CD4-positive, alpha-beta memory T cell (primary cell): ENCODE measurements at regions of chr2 and their contacts with region 1.

Region 1: DNA sequence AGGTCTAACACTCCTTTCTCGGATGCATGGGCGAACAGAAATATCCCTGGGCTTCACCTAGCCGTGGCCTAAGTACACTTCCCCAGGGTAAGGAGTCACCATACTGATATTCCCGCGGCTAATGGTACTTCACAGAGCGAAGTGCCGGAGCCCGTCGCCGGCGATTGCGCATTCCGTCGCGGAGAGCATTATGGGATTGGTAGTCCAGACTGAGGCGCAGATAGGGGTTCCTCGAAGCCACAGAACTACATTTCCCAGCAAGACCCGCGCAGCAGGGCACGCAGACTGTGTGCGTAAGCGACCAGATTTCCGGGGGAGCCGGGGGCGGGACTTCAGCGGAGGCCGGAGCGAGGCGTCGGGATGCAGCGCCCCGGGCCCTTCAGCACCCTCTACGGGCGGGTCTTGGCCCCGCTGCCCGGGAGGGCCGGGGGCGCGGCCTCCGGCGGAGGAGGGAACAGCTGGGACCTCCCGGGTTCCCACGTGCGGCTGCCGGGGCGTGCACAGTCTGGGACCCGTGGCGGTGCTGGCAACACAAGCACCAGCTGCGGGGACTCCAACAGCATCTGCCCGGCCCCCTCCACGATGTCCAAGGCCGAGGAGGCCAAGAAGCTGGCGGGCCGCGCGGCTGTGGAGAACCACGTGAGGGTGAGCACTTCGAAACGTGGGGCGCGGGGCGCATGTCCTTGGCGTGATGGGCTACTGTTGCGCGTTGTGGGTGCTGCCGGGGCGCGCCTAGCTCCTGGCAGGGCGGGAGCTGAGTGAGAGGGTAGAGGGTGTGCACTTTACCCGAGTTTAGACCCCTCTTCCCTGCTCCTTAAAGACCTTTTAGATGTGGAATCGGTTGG is at the start of gene RPIA:
- DNase-seq: peak; percentile 98 to 100 (median 98)
- H3K4me3 ChIP-seq: peak within 1 kb of the TSS; percentile 77 to 95
- H3K4me3 Mint-ChIP-seq: peak within 1 kb of the TSS; percentile 93 to 98 (median 96)
- H3K27ac ChIP-seq: peak within 1 kb of the TSS; percentile 78
- H3K27ac Mint-ChIP-seq: peak within 1 kb of the TSS; percentile 91 to 98 (median 96)
- H3K4me1 ChIP-seq: peaks cover 29% of the 10 kb centered on the region
- H3K4me1 Mint-ChIP-seq: peaks cover 37 to 68% (median 47%) of the 10 kb centered on the region in 4 donors
- H3K27me3 ChIP-seq: no peaks in the 10 kb centered on the region
- H3K27me3 Mint-ChIP-seq: no peaks in the 10 kb centered on the region
- total RNA-seq, gene RPIA: 20.9 to 23.2 TPM

Region 2: GRCh38 chr2:88599527-88599926 is 92.0 kb before region 1 on chr2:
- CTCF ChIA-PET with region 1: interaction called, 3 read pairs
- POLR2A ChIA-PET with region 1: interaction called, 6 read pairs
- intact Hi-C with region 1: loop called (anchors 5 kb)
- DNase-seq: no peak
- H3K4me3 ChIP-seq: no peak overlapping the region
- H3K4me3 Mint-ChIP-seq: no peak overlapping the region
- H3K27ac ChIP-seq: peak overlapping the region; percentile 33
- H3K27ac Mint-ChIP-seq: peak overlapping the region in 1 of 7 donors; percentile 36
- H3K4me1 ChIP-seq: peaks cover 16% of the 10 kb centered on the region
- H3K4me1 Mint-ChIP-seq: peaks cover 25 to 44% (median 35%) of the 10 kb centered on the region in 4 donors
- H3K27me3 ChIP-seq: no peaks in the 10 kb centered on the region
- H3K27me3 Mint-ChIP-seq: no peaks in the 10 kb centered on the region

Region 3: DNA sequence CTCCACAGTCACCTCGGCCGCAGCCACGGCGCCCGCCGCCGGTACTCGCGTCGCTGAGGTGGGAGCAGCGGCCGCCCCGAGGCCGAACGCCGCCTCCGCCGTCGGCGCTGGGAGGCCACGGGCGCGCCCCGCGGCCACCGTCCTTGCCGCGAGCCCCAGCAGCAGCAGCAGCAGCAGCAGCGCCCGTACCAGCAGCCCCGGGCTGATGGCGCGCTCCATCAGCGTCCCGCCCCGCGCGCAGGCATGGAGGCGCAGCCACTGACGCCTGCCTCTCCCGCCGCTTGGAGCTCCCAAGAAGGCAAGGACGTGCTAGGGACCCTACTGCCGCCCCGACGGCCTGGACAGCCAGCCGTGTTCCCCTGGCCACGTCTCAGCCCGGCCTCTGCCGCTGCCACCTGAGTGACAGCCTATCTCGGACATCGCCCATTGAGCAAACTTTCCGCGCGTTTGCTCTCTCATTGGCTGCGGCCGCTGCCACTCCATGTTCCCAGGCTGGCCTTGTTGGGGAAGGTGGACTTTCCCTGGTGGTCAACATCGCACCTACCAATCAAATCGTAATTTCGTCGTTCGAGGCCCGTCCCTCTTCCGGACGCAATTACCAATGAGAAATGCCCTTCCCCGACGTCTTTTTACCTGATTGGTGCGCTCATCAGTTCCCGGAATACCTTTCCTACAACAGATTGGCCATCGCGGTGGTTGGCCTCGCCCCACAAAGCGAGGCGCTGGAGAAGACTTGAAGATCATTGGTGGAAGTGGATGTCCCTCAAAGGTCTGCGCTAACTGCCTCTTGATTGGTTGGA is 64.3 kb before region 1 on chr2 and contains the start of gene EIF2AK3:
- CTCF ChIA-PET with region 1: interaction called, 6 read pairs
- POLR2A ChIA-PET with region 1: interaction called, 49 read pairs
- intact Hi-C with region 1: loop called (anchors 1 kb)
- DNase-seq: peak; percentile 95 to 99 (median 99)
- H3K4me3 ChIP-seq: peak within 1 kb of the TSS; percentile 83 to 89
- H3K4me3 Mint-ChIP-seq: peak within 1 kb of the TSS; percentile 92 to 98 (median 96)
- H3K27ac ChIP-seq: peak within 1 kb of the TSS; percentile 92
- H3K27ac Mint-ChIP-seq: peak within 1 kb of the TSS in 6 of 7 donors; percentile 94 to 98 (median 96)
- H3K4me1 ChIP-seq: peaks cover 36% of the 10 kb centered on the region
- H3K4me1 Mint-ChIP-seq: peaks cover 0 to 25% (median 13%) of the 10 kb centered on the region in 4 donors
- H3K27me3 ChIP-seq: no peaks in the 10 kb centered on the region
- H3K27me3 Mint-ChIP-seq: no peaks in the 10 kb centered on the region
- total RNA-seq, gene EIF2AK3: 30.9 to 31.0 TPM